Caco-2 (cell line): ENCODE measurements at regions of chr1 and their contacts with region 1.

Region 1: DNA sequence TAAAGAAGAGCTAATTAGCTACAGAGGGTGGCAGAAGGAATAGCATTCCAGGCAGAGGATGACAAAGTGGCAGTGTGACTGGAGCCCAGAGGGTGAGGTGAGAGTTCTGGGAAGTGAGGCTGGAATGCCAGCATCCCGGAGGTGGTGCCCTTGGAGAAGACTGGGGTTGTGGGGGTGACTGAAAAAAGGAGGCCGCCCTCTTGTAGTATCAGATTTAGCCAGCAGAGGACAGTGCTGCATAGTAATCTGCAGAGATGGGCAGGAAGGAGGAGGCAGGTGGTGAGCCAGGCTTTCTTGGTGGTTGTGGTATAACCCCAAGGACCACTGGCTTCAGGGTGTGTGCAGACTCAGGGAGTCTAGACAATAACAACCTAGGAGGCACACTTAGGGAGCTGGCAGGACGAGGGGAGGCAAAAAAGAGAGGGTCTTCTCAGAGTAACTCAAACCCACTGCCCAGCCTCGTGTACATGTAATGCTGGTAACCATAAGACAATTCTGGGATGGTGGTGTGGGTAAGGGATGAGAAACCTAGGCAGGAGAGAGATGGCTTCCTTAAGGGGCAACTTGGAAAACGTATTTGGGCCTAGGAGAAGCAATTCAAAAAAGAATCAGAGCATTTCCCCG is 30.5 kb downstream of the MROH7 start:
- DNase-seq: peak; percentile 59 to 68
- H3K4me3 ChIP-seq: no peak overlapping the region
- H3K4me3 Mint-ChIP-seq: no peak overlapping the region
- H3K27ac Mint-ChIP-seq: no peak overlapping the region
- H3K4me1 ChIP-seq: no peaks in the 10 kb centered on the region
- H3K4me1 Mint-ChIP-seq: no peaks in the 10 kb centered on the region
- H3K27me3 ChIP-seq: no peaks in the 10 kb centered on the region
- H3K27me3 Mint-ChIP-seq: no peaks in the 10 kb centered on the region
- CTCF ChIP-seq: peak; percentile 75 to 79

Region 2: GRCh38 chr1:54728027-54728426 is 55.9 kb after region 1 on chr1:
- CTCF ChIA-PET with region 1: no interaction called
- POLR2A ChIA-PET with region 1: no interaction called
- intact Hi-C with region 1: no loop called
- DNase-seq: no peak
- H3K4me3 ChIP-seq: no peak overlapping the region
- H3K4me3 Mint-ChIP-seq: no peak overlapping the region
- H3K27ac Mint-ChIP-seq: no peak overlapping the region
- H3K4me1 ChIP-seq: no peaks in the 10 kb centered on the region
- H3K4me1 Mint-ChIP-seq: no peaks in the 10 kb centered on the region
- H3K27me3 ChIP-seq: no peaks in the 10 kb centered on the region
- H3K27me3 Mint-ChIP-seq: no peaks in the 10 kb centered on the region
- CTCF ChIP-seq: no peak

Region 3: GRCh38 chr1:54800899-54801759 is 129.0 kb after region 1 on chr1 and contains the start of gene TTC22:
- CTCF ChIA-PET with region 1: interaction called, 6 read pairs
- POLR2A ChIA-PET with region 1: no interaction called
- intact Hi-C with region 1: loop called (anchors 2 kb)
- DNase-seq: peak; percentile 79 to 85
- H3K4me3 ChIP-seq: peak within 1 kb of the TSS; percentile 66
- H3K4me3 Mint-ChIP-seq: peak within 1 kb of the TSS; percentile 88
- H3K27ac Mint-ChIP-seq: peak within 1 kb of the TSS; percentile 37
- H3K4me1 ChIP-seq: peaks cover 9% of the 10 kb centered on the region; the same call in 1 of the 2 replicates
- H3K4me1 Mint-ChIP-seq: peaks cover 31% of the 10 kb centered on the region
- H3K27me3 ChIP-seq: no peaks in the 10 kb centered on the region
- H3K27me3 Mint-ChIP-seq: no peaks in the 10 kb centered on the region
- CTCF ChIP-seq: peak; percentile 29 to 61
- total RNA-seq, gene TTC22: 8.8 and 9.9 TPM in 2 replicates

Region 4: GRCh38 chr1:54810100-54810942 is 138.2 kb after region 1 on chr1:
- CTCF ChIA-PET with region 1: no interaction called
- POLR2A ChIA-PET with region 1: no interaction called
- intact Hi-C with region 1: loop called (anchors 1 kb)
- DNase-seq: peak; percentile 56 to 75
- H3K4me3 ChIP-seq: no peak overlapping the region
- H3K4me3 Mint-ChIP-seq: no peak overlapping the region
- H3K27ac Mint-ChIP-seq: no peak overlapping the region
- H3K4me1 ChIP-seq: no peaks in the 10 kb centered on the region
- H3K4me1 Mint-ChIP-seq: peaks cover 2% of the 10 kb centered on the region
- H3K27me3 ChIP-seq: no peaks in the 10 kb centered on the region
- H3K27me3 Mint-ChIP-seq: no peaks in the 10 kb centered on the region
- CTCF ChIP-seq: peak; percentile 66 to 69

Region 5: GRCh38 chr1:55140546-55140983 is 468.5 kb after region 1 on chr1:
- CTCF ChIA-PET with region 1: no interaction called
- POLR2A ChIA-PET with region 1: no interaction called
- intact Hi-C with region 1: no loop called
- DNase-seq: peak; percentile 38 to 58
- H3K4me3 ChIP-seq: no peak overlapping the region
- H3K4me3 Mint-ChIP-seq: no peak overlapping the region
- H3K27ac Mint-ChIP-seq: no peak overlapping the region
- H3K4me1 ChIP-seq: no peaks in the 10 kb centered on the region
- H3K4me1 Mint-ChIP-seq: no peaks in the 10 kb centered on the region
- H3K27me3 ChIP-seq: no peaks in the 10 kb centered on the region
- H3K27me3 Mint-ChIP-seq: no peaks in the 10 kb centered on the region
- CTCF ChIP-seq: peak; percentile 59 to 65